CD4-positive, alpha-beta memory T cell (primary cell): ENCODE measurements at regions of chr15 and their contacts with region 1.

Region 1: DNA sequence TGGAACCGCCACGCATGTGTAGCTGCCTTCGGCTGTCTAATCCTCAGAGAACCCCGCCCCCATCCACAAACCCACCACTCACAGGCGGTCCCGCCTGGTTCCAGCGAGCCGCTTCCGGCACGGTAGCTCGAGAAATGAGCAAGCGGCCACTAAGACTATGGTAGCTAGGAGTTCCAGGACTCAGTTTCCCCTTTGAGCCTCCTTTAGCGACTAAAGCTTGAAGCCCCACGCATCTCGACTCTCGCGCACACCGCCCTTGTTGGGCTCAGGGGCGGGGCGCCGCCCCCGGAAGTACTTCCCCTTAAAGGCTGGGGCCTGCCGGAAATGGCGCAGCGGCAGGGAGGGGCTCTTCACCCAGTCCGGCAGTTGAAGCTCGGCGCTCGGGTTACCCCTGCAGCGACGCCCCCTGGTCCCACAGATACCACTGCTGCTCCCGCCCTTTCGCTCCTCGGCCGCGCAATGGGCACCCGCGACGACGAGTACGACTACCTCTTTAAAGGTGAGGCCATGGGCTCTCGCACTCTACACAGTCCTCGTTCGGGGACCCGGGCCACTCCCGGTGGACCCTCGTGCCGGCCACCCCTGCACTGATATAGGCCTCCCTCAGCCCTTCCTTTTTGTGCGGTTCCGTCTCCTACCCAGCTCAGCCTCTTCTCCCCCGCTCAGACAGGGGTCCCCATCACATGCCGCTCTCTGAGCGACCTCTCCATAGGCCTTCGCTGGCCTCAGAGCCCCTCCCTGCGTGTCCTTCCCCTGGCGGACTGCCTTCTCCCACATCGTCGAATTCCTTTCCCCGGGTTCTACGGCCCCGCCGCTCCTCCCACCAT is at the start of gene RAB11A:
- DNase-seq: peak; percentile 96 to 97 (median 96)
- H3K4me3 ChIP-seq: peak within 1 kb of the TSS; percentile 92 to 99
- H3K4me3 Mint-ChIP-seq: peak within 1 kb of the TSS; percentile 95 to 100 (median 98)
- H3K27ac ChIP-seq: peak within 1 kb of the TSS; percentile 89
- H3K27ac Mint-ChIP-seq: peak within 1 kb of the TSS; percentile 98 to 100 (median 99)
- H3K4me1 ChIP-seq: peaks cover 40% of the 10 kb centered on the region
- H3K4me1 Mint-ChIP-seq: peaks cover 14 to 45% (median 26%) of the 10 kb centered on the region in 4 donors
- H3K27me3 ChIP-seq: no peaks in the 10 kb centered on the region
- H3K27me3 Mint-ChIP-seq: peaks cover 0 to 5% of the 10 kb centered on the region in 2 donors
- total RNA-seq, gene RAB11A: 84.7 to 95.8 TPM

Region 2: DNA sequence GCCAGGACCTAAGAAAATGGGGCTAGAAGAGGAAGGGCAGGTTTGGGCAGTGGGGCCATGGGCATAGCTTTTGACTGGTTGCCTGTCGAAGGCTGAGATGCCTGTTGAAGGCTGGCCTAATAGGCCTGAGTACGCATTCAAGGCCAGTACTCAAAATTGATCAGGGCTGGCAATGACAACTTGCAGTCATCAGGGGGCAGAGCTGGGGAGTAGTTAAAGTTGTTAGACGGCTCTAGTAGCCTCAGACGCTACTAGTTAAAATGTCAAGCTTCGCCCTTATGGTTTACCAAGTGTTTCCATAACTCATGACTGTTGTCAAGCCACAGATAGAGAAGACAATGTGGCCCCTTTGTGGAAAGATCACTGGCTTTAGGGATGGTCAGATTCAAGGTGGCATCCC is 908.3 kb before region 1 on chr15:
- CTCF ChIA-PET with region 1: no interaction called
- POLR2A ChIA-PET with region 1: no interaction called
- intact Hi-C with region 1: no loop called
- DNase-seq: no peak
- H3K4me3 ChIP-seq: no peak overlapping the region
- H3K4me3 Mint-ChIP-seq: no peak overlapping the region
- H3K27ac ChIP-seq: no peak overlapping the region
- H3K27ac Mint-ChIP-seq: peak overlapping the region in 1 of 7 donors; percentile 50
- H3K4me1 ChIP-seq: no peaks in the 10 kb centered on the region
- H3K4me1 Mint-ChIP-seq: no peaks in the 10 kb centered on the region
- H3K27me3 ChIP-seq: no peaks in the 10 kb centered on the region
- H3K27me3 Mint-ChIP-seq: no peaks in the 10 kb centered on the region

Region 3: DNA sequence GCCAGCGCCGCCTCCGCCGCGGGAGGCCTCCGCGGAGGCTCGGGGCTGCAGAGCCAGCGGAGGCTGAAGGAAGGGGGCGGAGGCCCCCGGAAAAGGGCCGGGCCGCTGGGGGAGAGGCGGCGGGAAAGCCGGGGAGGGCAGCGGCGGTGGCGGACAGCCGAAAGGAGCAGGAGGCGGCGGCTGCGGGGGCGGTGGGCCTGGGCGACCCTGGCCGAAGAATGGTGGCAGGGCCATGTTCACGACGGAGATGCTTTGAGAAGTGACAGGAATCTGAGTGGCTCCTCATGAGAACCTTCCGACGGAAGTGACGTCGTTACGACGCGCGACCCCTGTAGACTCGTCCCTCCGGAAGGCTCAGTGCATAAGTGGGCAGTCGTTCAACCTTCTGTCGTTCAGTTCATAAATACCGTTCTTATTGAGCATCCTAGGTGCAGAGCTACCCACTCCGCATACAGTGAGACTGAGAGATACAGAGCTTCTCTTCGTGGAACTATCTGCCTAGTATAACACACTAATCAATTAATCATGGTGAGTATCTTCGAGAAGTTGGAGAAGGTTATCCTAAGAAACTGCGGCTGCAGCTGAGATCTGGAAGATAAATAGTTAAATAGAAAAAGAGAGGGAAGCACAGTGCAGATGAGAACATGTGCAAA is 735.7 kb before region 1 on chr15 and contains the start of gene PDCD7:
- CTCF ChIA-PET with region 1: no interaction called
- POLR2A ChIA-PET with region 1: no interaction called
- intact Hi-C with region 1: loop called (anchors 2 kb)
- DNase-seq: peak; percentile 82 to 89 (median 87)
- H3K4me3 ChIP-seq: peak within 1 kb of the TSS; percentile 70 to 91
- H3K4me3 Mint-ChIP-seq: peak within 1 kb of the TSS; percentile 89 to 96 (median 93)
- H3K27ac ChIP-seq: peak within 1 kb of the TSS; percentile 82
- H3K27ac Mint-ChIP-seq: peak within 1 kb of the TSS; percentile 91 to 99 (median 96)
- H3K4me1 ChIP-seq: peaks cover 26% of the 10 kb centered on the region
- H3K4me1 Mint-ChIP-seq: peaks cover 20 to 42% (median 31%) of the 10 kb centered on the region in 4 donors
- H3K27me3 ChIP-seq: no peaks in the 10 kb centered on the region
- H3K27me3 Mint-ChIP-seq: no peaks in the 10 kb centered on the region
- total RNA-seq, gene PDCD7: 30.5 to 40.5 TPM

Region 4: GRCh38 chr15:65576664-65577063 is 292.7 kb before region 1 on chr15:
- CTCF ChIA-PET with region 1: no interaction called
- POLR2A ChIA-PET with region 1: no interaction called
- intact Hi-C with region 1: no loop called
- DNase-seq: no peak
- H3K4me3 ChIP-seq: no peak overlapping the region
- H3K4me3 Mint-ChIP-seq: no peak overlapping the region
- H3K27ac ChIP-seq: no peak overlapping the region
- H3K27ac Mint-ChIP-seq: peak overlapping the region in 2 of 7 donors; percentile 16 to 65
- H3K4me1 ChIP-seq: no peaks in the 10 kb centered on the region
- H3K4me1 Mint-ChIP-seq: no peaks in the 10 kb centered on the region
- H3K27me3 ChIP-seq: no peaks in the 10 kb centered on the region
- H3K27me3 Mint-ChIP-seq: no peaks in the 10 kb centered on the region

Region 5: DNA sequence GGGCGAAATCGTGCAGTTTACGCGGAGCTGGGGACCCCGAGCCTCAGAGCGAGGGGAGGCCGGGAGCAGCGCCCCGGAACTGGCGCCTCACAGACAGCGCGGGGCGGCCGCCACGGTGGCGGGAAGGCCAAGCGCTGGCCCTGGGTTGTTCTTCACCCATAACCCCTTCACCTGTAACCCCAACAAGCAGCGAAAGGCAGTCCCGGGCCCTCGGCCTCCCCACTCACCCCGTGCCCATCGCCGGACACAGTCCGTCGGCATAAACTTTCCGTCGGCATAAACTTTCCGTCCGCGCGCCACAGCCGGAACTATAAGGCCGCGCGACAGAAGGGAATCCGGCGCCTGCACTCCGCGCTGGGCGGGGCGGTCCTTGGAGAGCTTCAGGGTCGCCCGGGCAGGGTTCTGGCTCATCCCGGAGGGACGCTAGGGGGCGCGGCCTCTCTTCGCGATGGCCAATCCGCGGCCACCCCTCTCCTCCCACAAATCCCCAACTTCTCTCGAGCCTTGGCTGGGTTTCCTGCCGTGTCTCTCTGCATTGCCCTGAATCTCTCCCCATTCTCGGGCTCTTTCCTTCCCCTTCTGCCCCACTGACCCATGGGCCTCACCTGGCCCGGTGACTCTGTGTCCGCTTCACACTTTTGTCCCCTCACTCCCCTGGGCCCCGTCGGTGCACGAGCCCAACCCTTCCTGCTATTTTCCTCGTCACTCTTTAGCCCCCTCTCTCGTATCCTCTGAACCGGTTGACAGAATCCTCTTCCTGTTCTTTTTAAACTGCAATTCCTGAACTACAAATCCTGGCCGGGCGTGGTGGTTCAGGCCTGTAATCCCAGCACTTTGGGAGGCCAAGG is 258.2 kb before region 1 on chr15 and contains the start of gene INTS14:
- CTCF ChIA-PET with region 1: interaction called, 20 read pairs
- POLR2A ChIA-PET with region 1: interaction called, 32 read pairs
- intact Hi-C with region 1: loop called (anchors 1 kb)
- DNase-seq: peak; percentile 83 to 89 (median 84)
- H3K4me3 ChIP-seq: peak within 1 kb of the TSS; percentile 85 to 97
- H3K4me3 Mint-ChIP-seq: peak within 1 kb of the TSS; percentile 96 to 99 (median 98)
- H3K27ac ChIP-seq: peak within 1 kb of the TSS; percentile 76
- H3K27ac Mint-ChIP-seq: peak within 1 kb of the TSS; percentile 98 to 99 (median 99)
- H3K4me1 ChIP-seq: peaks cover 27% of the 10 kb centered on the region
- H3K4me1 Mint-ChIP-seq: peaks cover 21 to 49% (median 34%) of the 10 kb centered on the region in 4 donors
- H3K27me3 ChIP-seq: no peaks in the 10 kb centered on the region
- H3K27me3 Mint-ChIP-seq: no peaks in the 10 kb centered on the region
- total RNA-seq, gene INTS14: 35.3 to 40.3 TPM

Region 6: GRCh38 chr15:65792130-65792987 is 77.0 kb before region 1 on chr15 and contains the start of gene DENND4A:
- CTCF ChIA-PET with region 1: interaction called, 3 read pairs
- POLR2A ChIA-PET with region 1: interaction called, 41 read pairs
- intact Hi-C with region 1: loop called (anchors 1 kb)
- DNase-seq: peak; percentile 99
- H3K4me3 ChIP-seq: peak within 1 kb of the TSS; percentile 87 to 94
- H3K4me3 Mint-ChIP-seq: peak within 1 kb of the TSS; percentile 93 to 99 (median 96)
- H3K27ac ChIP-seq: peak within 1 kb of the TSS; percentile 97
- H3K27ac Mint-ChIP-seq: peak within 1 kb of the TSS; percentile 98 to 100 (median 99)
- H3K4me1 ChIP-seq: peaks cover 46% of the 10 kb centered on the region
- H3K4me1 Mint-ChIP-seq: peaks cover 29 to 60% (median 48%) of the 10 kb centered on the region in 4 donors
- H3K27me3 ChIP-seq: no peaks in the 10 kb centered on the region
- H3K27me3 Mint-ChIP-seq: no peaks in the 10 kb centered on the region
- total RNA-seq, gene DENND4A: 63.1 to 69.4 TPM

Region 7: GRCh38 chr15:65832549-65833364 is 36.6 kb before region 1 on chr15:
- CTCF ChIA-PET with region 1: interaction called, 9 read pairs
- POLR2A ChIA-PET with region 1: interaction called, 21 read pairs
- intact Hi-C with region 1: no loop called
- DNase-seq: peak; percentile 65 to 73 (median 69)
- H3K4me3 ChIP-seq: peak overlapping the region in 1 of 2 donors; percentile 7
- H3K4me3 Mint-ChIP-seq: peak overlapping the region; percentile 77 to 91 (median 81)
- H3K27ac ChIP-seq: peak overlapping the region; percentile 71
- H3K27ac Mint-ChIP-seq: peak overlapping the region; percentile 93 to 97 (median 96)
- H3K4me1 ChIP-seq: peaks cover 68% of the 10 kb centered on the region
- H3K4me1 Mint-ChIP-seq: peaks cover 47 to 72% (median 59%) of the 10 kb centered on the region in 4 donors
- H3K27me3 ChIP-seq: no peaks in the 10 kb centered on the region
- H3K27me3 Mint-ChIP-seq: no peaks in the 10 kb centered on the region

Region 8: GRCh38 chr15:65881766-65882434 is 12.6 kb after region 1 on chr15:
- CTCF ChIA-PET with region 1: interaction called, 4 read pairs
- POLR2A ChIA-PET with region 1: interaction called, 18 read pairs
- intact Hi-C with region 1: no loop called
- DNase-seq: peak in 1 of 5 donors; percentile 10
- H3K4me3 ChIP-seq: no peak overlapping the region
- H3K4me3 Mint-ChIP-seq: peak overlapping the region in 5 of 8 donors; percentile 9 to 46 (median 31)
- H3K27ac ChIP-seq: no peak overlapping the region
- H3K27ac Mint-ChIP-seq: peak overlapping the region in 6 of 7 donors; percentile 13 to 82 (median 64)
- H3K4me1 ChIP-seq: peaks cover 48% of the 10 kb centered on the region
- H3K4me1 Mint-ChIP-seq: peaks cover 36 to 70% (median 54%) of the 10 kb centered on the region in 4 donors
- H3K27me3 ChIP-seq: no peaks in the 10 kb centered on the region
- H3K27me3 Mint-ChIP-seq: no peaks in the 10 kb centered on the region

Region 9: GRCh38 chr15:66293419-66294156 is 424.2 kb after region 1 on chr15 and contains the start of gene DIS3L:
- CTCF ChIA-PET with region 1: no interaction called
- POLR2A ChIA-PET with region 1: interaction called, 15 read pairs
- intact Hi-C with region 1: loop called (anchors 10 kb)
- DNase-seq: peak; percentile 65 to 78 (median 72)
- H3K4me3 ChIP-seq: peak within 1 kb of the TSS; percentile 57 to 91
- H3K4me3 Mint-ChIP-seq: peak within 1 kb of the TSS; percentile 85 to 93 (median 90)
- H3K27ac ChIP-seq: peak within 1 kb of the TSS; percentile 91
- H3K27ac Mint-ChIP-seq: peak within 1 kb of the TSS; percentile 93 to 96 (median 95)
- H3K4me1 ChIP-seq: peaks cover 50% of the 10 kb centered on the region
- H3K4me1 Mint-ChIP-seq: peaks cover 26 to 50% (median 41%) of the 10 kb centered on the region in 4 donors
- H3K27me3 ChIP-seq: no peaks in the 10 kb centered on the region
- H3K27me3 Mint-ChIP-seq: no peaks in the 10 kb centered on the region
- total RNA-seq, gene DIS3L: 36.8 to 40.3 TPM